MCF 10A (cell line): ENCODE measurements at regions of chr4 and their contacts with region 1.

Region 1: DNA sequence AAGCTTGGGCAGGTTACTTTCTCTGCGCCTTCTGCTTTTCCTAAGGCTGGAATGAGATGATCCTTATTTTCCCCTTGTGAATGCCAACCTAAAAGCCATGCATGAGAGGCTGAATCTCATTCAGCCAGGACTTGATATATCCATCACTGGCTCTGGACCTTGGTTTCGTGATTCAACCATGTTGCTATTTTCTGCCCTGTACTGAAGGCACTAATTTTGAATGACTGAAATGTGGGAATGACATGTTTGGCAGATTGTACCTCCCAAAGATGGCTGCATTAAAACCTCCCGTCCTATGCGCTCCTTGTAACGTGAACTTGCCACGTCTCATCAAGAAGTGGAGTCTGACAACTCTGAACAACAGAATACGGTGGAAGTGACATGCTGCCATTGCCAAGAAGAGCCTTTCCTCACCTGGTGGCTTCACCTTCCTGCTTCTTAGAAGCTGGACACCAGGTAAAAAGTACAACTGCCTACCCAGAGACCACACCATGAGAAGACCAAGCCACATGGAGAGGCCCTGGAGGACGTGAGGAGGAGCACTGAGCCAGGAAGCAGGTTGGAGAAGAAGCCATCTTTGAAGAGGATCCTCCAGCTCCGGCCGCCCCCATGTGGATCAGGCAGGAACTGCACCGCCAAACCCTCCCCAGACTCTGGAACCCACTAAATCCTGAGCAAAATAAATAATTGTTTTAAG is 174.5 kb downstream of the NSUN7 start:
- DNase-seq: peak; percentile 69
- H3K4me3 Mint-ChIP-seq: no peak overlapping the region
- H3K27ac Mint-ChIP-seq: no peak overlapping the region
- H3K4me1 Mint-ChIP-seq: peaks cover 25% of the 10 kb centered on the region
- H3K27me3 Mint-ChIP-seq: no peaks in the 10 kb centered on the region
- CTCF ChIP-seq: peak; percentile 77

Region 2: DNA sequence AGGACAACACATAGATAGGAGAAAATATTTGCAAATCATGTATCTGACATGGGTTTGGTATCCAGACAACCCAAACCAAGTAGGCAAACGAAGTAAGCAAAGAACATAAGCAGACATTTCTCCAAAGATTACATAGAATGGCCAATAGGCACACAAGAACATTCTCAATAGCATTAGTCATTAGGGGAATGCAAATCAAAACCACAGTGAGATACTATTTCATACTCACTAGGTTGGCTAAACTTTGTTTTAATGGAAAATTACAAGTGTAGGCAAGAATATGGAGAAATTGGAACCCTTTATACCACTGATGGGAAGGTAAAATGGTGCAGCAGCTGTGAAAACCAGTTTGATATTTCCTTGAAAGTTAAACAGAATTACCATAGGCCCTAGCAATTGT is 514.4 kb before region 1 on chr4:
- CTCF ChIA-PET with region 1: no interaction called
- POLR2A ChIA-PET with region 1: no interaction called
- intact Hi-C with region 1: no loop called
- DNase-seq: peak; percentile 30
- H3K4me3 Mint-ChIP-seq: no peak overlapping the region
- H3K27ac Mint-ChIP-seq: no peak overlapping the region
- H3K4me1 Mint-ChIP-seq: no peaks in the 10 kb centered on the region
- H3K27me3 Mint-ChIP-seq: no peaks in the 10 kb centered on the region
- CTCF ChIP-seq: no peak

Region 3: DNA sequence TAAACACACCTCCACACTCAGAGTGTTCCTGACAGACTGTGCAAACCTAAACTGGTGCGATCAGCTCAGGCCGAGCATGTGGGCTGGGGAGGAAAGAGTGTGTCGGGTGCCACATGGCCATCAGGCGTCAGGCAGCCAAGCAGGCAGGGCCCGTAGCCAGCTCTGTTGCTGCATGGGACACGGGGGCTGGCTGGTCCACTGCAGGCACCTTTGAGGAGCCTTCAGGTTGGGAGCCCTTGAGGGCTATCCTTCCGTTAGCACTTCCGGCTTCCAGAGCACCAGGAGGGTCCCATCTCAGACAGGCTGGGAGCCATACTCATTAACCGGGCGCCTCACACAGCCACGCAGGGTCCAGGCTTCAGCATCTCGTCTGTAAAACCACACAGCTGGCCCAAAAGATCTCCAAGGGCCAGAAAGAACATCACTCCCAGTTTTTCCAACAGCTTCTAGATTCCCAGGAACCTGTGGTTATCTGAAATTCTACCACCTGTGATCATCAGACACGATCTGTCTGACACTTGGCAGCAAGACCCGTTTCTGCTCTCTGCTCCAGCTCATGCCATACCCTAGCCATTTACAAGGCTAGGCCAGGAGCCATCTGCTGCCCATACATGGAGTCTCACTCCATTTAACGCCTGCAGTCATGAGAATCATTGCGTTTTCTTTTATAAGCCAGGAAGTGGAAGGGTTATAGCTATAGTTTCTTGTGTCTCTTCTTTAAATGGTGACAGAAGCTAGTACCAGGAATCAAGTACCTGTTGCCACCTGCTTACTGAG is 87.0 kb before region 1 on chr4:
- CTCF ChIA-PET with region 1: no interaction called
- POLR2A ChIA-PET with region 1: no interaction called
- intact Hi-C with region 1: no loop called
- DNase-seq: no peak
- H3K4me3 Mint-ChIP-seq: no peak overlapping the region
- H3K27ac Mint-ChIP-seq: no peak overlapping the region
- H3K4me1 Mint-ChIP-seq: no peaks in the 10 kb centered on the region
- H3K27me3 Mint-ChIP-seq: no peaks in the 10 kb centered on the region
- CTCF ChIP-seq: no peak

Region 4: DNA sequence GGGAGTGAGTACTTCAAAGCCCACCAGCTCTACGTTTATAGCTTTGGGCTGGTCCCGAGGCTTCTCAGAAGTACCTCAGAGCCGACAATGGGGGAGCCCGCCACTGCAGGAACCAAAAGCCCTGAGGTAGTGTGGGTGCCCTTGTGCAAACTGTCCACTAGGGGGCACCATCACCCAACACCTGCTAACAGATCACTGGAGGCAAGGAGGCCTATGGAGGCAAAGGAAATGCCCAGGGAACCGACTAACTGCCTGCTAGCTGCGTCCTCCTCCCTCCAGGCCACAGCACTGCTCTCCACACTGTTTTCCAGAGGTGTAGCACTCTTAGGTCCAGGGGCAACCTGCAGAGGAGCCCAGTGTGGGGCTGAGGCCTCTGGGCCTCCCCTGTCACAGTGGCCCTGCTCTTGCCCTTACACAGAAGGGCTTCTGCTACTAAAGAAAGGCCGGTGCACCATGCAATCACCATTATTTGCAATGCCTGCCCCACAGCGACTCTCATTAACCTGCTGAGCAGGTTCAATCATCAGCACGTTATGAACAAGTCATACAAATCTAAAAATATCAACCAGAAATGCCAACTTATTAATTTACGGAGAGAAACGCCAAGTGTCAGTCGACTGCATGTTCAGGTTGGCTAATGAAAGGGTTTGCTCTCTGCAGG is 15.4 kb before region 1 on chr4:
- CTCF ChIA-PET with region 1: interaction called, 30 read pairs
- POLR2A ChIA-PET with region 1: interaction called, 3 read pairs
- intact Hi-C with region 1: loop called (anchors 1 kb)
- DNase-seq: peak; percentile 93
- H3K4me3 Mint-ChIP-seq: peak overlapping the region; percentile 38
- H3K27ac Mint-ChIP-seq: peak overlapping the region; percentile 93
- H3K4me1 Mint-ChIP-seq: peaks cover 23% of the 10 kb centered on the region
- H3K27me3 Mint-ChIP-seq: no peaks in the 10 kb centered on the region
- CTCF ChIP-seq: peak; percentile 92

Region 5: GRCh38 chr4:40940317-40940741 is 16.1 kb after region 1 on chr4:
- CTCF ChIA-PET with region 1: interaction called, 16 read pairs
- POLR2A ChIA-PET with region 1: no interaction called
- intact Hi-C with region 1: no loop called
- DNase-seq: no peak
- H3K4me3 Mint-ChIP-seq: no peak overlapping the region
- H3K27ac Mint-ChIP-seq: peak overlapping the region; percentile 86
- H3K4me1 Mint-ChIP-seq: no peaks in the 10 kb centered on the region
- H3K27me3 Mint-ChIP-seq: no peaks in the 10 kb centered on the region
- CTCF ChIP-seq: no peak

Region 6: GRCh38 chr4:41406113-41406516 is 481.9 kb after region 1 on chr4:
- CTCF ChIA-PET with region 1: no interaction called
- POLR2A ChIA-PET with region 1: no interaction called
- intact Hi-C with region 1: no loop called
- DNase-seq: no peak
- H3K4me3 Mint-ChIP-seq: no peak overlapping the region
- H3K27ac Mint-ChIP-seq: no peak overlapping the region
- H3K4me1 Mint-ChIP-seq: peaks cover 27% of the 10 kb centered on the region
- H3K27me3 Mint-ChIP-seq: no peaks in the 10 kb centered on the region
- CTCF ChIP-seq: no peak